MCF 10A (cell line): ENCODE measurements at regions of chr5 and their contacts with region 1.

Region 1: DNA sequence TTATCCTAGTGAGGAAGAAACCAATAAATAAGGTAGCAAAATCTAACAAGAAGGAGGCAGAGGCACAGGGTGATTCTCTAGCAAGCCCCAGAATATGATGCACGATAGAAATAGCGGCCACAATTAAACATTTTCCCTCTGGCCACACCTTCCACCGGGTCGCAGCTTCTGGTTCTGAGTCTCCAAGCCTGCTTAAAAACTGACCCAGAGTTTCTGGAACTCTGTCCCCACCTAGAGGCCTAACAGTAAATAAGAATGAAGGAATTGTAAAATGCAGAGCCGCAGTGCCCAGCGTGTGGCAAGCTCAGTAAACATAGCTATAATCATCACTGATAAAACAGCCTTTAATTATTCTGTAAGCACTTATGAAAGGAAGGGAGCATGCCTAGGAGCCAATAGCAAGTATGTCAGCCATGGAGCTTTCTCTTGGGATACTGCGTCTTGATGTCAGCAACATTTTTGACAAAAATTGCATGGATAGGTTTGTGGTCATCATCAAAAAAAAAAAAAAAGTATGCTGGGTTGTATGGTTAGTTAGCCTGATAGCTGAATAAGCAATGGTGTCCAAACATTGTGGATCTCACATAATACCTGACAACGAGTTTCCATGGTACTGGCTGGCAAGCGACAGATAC is 465.5 kb downstream of the DNAH5 start:
- DNase-seq: peak; percentile 80
- H3K4me3 Mint-ChIP-seq: no peak overlapping the region
- H3K27ac Mint-ChIP-seq: no peak overlapping the region
- H3K4me1 Mint-ChIP-seq: peaks cover 11% of the 10 kb centered on the region
- H3K27me3 Mint-ChIP-seq: no peaks in the 10 kb centered on the region
- CTCF ChIP-seq: peak; percentile 77

Region 2: GRCh38 chr5:11619339-11620024 is 1859.5 kb before region 1 on chr5:
- CTCF ChIA-PET with region 1: no interaction called
- POLR2A ChIA-PET with region 1: no interaction called
- intact Hi-C with region 1: loop called (anchors 5 kb)
- DNase-seq: peak; percentile 49
- H3K4me3 Mint-ChIP-seq: no peak overlapping the region
- H3K27ac Mint-ChIP-seq: no peak overlapping the region
- H3K4me1 Mint-ChIP-seq: peaks cover 12% of the 10 kb centered on the region
- H3K27me3 Mint-ChIP-seq: peaks cover 23% of the 10 kb centered on the region
- CTCF ChIP-seq: peak; percentile 29

Region 3: DNA sequence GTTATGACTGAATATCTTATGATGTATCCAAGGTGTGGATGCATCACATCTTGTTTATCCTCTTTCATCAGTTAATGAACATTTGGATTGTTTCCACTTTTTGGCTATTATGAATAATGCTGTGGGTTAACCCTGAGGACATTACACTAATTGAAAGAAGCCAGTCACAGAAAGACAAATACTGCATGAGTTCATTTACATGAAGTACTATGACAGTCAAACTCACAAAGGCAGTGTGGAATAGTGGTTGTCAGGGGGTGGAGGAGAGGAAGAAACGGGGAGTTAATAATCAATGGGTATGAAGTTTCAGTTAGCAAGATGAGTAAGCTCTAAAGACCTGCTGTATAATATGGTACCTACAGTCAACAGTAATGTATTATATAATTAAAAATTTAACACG is 1165.3 kb before region 1 on chr5:
- CTCF ChIA-PET with region 1: interaction called, 11 read pairs
- POLR2A ChIA-PET with region 1: no interaction called
- intact Hi-C with region 1: no loop called
- DNase-seq: no peak
- H3K4me3 Mint-ChIP-seq: no peak overlapping the region
- H3K27ac Mint-ChIP-seq: no peak overlapping the region
- H3K4me1 Mint-ChIP-seq: peaks cover 7% of the 10 kb centered on the region
- H3K27me3 Mint-ChIP-seq: no peaks in the 10 kb centered on the region
- CTCF ChIP-seq: no peak

Region 4: GRCh38 chr5:12947379-12947778 is 531.6 kb before region 1 on chr5:
- CTCF ChIA-PET with region 1: no interaction called
- POLR2A ChIA-PET with region 1: no interaction called
- intact Hi-C with region 1: loop called (anchors 5 kb)
- DNase-seq: no peak
- H3K4me3 Mint-ChIP-seq: no peak overlapping the region
- H3K27ac Mint-ChIP-seq: no peak overlapping the region
- H3K4me1 Mint-ChIP-seq: peaks cover 10% of the 10 kb centered on the region
- H3K27me3 Mint-ChIP-seq: no peaks in the 10 kb centered on the region
- CTCF ChIP-seq: no peak

Region 5: GRCh38 chr5:13524936-13525335 is 46.0 kb after region 1 on chr5:
- CTCF ChIA-PET with region 1: no interaction called
- POLR2A ChIA-PET with region 1: no interaction called
- intact Hi-C with region 1: no loop called
- DNase-seq: no peak
- H3K4me3 Mint-ChIP-seq: no peak overlapping the region
- H3K27ac Mint-ChIP-seq: no peak overlapping the region
- H3K4me1 Mint-ChIP-seq: no peaks in the 10 kb centered on the region
- H3K27me3 Mint-ChIP-seq: peaks cover 3% of the 10 kb centered on the region
- CTCF ChIP-seq: no peak

Region 6: DNA sequence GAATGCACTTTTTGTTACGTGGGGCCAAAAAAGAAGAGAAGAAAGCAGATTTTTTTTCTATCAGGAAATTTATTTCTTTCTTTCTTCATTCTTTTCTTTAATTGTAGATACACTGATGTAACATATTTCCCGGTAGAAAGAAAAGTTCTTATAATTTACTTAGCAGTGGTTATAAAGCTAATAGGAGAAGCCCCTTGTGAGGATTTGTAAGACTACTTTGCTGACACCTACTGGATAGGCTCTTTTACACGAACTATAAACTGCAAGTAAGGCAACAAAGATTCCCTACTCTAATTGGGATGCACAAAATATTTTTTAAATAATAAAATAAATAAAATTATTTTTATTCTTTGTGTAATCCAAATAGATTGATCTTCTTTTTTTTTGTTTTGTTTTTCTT is 181.1 kb after region 1 on chr5:
- CTCF ChIA-PET with region 1: interaction called, 4 read pairs
- POLR2A ChIA-PET with region 1: no interaction called
- intact Hi-C with region 1: loop called (anchors 10 kb)
- DNase-seq: peak; percentile 27
- H3K4me3 Mint-ChIP-seq: no peak overlapping the region
- H3K27ac Mint-ChIP-seq: no peak overlapping the region
- H3K4me1 Mint-ChIP-seq: peaks cover 37% of the 10 kb centered on the region
- H3K27me3 Mint-ChIP-seq: no peaks in the 10 kb centered on the region
- CTCF ChIP-seq: no peak

Region 7: DNA sequence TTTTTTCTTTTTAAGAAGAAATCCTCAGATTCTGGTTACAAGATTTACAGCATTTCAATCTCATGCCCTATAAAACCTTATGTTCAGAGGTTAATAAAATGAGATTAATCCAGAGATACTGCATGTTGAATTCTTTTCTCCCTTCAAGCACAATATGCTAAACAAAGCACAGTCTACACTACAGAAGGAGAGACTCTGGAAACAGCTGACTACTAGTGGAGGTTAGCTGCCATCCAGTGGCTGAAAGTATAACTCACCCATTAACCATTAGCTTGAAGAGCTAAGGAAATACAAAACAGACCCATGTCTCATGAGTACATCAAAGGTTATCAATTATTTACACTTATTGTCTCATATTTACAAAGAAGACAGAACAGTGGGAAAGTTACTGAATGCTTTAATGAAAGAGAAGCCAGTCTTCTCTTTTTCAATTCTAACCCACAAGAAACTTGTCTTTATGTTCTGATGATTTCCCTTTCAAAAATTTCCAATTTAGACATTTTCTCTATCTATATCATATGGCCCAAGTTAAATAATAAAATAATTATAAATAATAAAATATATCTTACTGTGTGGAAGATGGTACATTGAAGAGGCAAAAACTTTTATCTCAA is 478.2 kb after region 1 on chr5:
- CTCF ChIA-PET with region 1: interaction called, 8 read pairs
- POLR2A ChIA-PET with region 1: no interaction called
- intact Hi-C with region 1: loop called (anchors 2 kb)
- DNase-seq: peak; percentile 68
- H3K4me3 Mint-ChIP-seq: no peak overlapping the region
- H3K27ac Mint-ChIP-seq: no peak overlapping the region
- H3K4me1 Mint-ChIP-seq: no peaks in the 10 kb centered on the region
- H3K27me3 Mint-ChIP-seq: no peaks in the 10 kb centered on the region
- CTCF ChIP-seq: peak; percentile 74